MCF 10A (cell line): ENCODE measurements at regions of chr6 and their contacts with region 1.

Region 1: GRCh38 chr6:152948150-152948768 is 34.6 kb downstream of the FBXO5 start:
- DNase-seq: peak; percentile 71
- H3K4me3 Mint-ChIP-seq: no peak overlapping the region
- H3K27ac Mint-ChIP-seq: no peak overlapping the region
- H3K4me1 Mint-ChIP-seq: peaks cover 15% of the 10 kb centered on the region
- H3K27me3 Mint-ChIP-seq: peaks cover 19% of the 10 kb centered on the region
- CTCF ChIP-seq: peak; percentile 77

Region 2: DNA sequence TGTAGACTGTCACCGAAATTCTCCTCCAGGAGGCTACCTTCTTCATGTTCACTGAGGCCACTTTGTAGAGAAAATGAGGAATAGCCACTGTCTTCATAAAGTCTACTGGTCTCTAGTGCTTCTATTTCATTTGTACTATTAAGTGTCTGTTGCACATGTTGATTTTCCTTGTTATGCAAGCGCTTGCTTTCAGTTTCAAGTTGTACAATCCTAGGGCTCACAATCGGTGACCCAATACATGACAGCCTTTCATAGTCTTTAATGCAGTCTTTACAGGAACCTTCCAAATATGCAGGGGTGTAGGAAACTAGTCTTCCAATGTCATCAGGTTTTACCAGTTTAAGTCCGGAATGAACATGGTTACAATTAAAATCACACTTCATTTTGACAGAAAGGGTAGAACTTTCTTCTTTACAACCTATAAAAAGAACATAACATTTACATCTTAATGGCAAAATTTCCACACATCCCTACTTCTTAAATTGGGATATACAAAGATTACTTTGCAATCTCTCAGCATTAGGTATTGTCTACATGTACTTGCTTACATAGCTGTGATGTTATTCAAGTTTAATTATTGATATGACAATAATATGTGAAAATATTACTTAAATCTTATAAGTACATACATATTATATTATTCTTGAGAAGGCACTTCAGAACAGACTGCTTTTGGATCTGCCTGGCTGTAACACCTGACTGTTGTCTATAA is 27.1 kb after region 1 on chr6:
- CTCF ChIA-PET with region 1: interaction called, 10 read pairs
- POLR2A ChIA-PET with region 1: interaction called, 3 read pairs
- intact Hi-C with region 1: no loop called
- DNase-seq: peak; percentile 34
- H3K4me3 Mint-ChIP-seq: no peak overlapping the region
- H3K27ac Mint-ChIP-seq: peak overlapping the region; percentile 67
- H3K4me1 Mint-ChIP-seq: peaks cover 33% of the 10 kb centered on the region
- H3K27me3 Mint-ChIP-seq: no peaks in the 10 kb centered on the region
- CTCF ChIP-seq: no peak

Region 3: DNA sequence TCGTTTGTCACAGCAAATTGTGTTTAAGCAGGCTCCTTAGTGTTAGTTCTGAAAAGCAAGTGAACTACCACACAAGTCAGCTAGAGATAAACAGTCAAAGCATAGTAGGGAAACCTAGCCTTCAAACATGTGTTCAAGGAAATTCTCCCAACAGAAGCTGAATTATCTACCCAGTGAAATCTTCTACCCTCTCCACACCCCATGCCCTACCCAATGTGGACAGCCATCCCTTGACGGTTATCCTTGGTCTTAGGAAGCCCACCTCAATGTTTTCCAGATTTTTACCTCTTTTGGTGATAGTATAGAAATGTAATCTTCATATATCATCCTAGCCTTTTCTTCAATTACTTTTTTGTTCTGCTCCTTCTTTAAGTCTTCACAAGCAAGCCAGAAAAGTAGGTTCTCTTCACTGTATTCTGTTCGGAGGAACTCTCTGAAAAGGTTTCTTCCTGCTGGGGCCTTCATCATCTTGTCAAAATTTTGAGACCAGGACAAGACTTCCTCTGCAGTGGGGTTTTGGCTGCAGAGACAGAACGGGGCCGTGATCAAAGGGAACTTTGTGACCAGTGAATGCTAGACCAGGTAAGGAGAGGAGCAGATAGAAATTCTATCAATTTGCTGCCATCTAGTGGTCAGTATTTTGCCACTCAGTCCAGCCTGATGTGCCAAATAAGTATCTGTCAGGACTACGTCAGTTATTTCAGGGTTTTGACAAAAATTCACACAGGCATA is 75.9 kb after region 1 on chr6:
- CTCF ChIA-PET with region 1: interaction called, 55 read pairs
- POLR2A ChIA-PET with region 1: no interaction called
- intact Hi-C with region 1: no loop called
- DNase-seq: peak; percentile 70
- H3K4me3 Mint-ChIP-seq: no peak overlapping the region
- H3K27ac Mint-ChIP-seq: no peak overlapping the region
- H3K4me1 Mint-ChIP-seq: peaks cover 6% of the 10 kb centered on the region
- H3K27me3 Mint-ChIP-seq: no peaks in the 10 kb centered on the region
- CTCF ChIP-seq: peak; percentile 70

Region 4: DNA sequence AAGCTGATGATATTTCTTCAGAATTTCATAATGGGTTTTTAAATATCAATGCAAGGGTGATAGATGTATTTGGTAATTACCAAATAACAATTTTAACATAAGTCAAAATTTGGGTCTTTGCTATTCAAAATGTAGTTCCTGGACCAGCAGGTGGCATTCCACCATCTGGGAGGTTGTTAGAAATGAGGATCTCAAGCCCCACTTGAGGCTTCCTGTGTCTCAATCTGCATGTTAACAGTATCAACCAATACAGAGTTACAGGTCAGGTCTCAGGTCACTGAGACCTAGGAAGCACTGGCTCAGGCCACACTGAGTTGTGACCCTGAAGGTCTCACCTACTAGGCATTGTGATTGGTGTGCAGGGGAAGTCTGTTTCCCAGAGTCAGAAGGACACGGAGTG is 111.5 kb after region 1 on chr6:
- CTCF ChIA-PET with region 1: no interaction called
- POLR2A ChIA-PET with region 1: no interaction called
- intact Hi-C with region 1: no loop called
- DNase-seq: peak; percentile 25
- H3K4me3 Mint-ChIP-seq: no peak overlapping the region
- H3K27ac Mint-ChIP-seq: no peak overlapping the region
- H3K4me1 Mint-ChIP-seq: no peaks in the 10 kb centered on the region
- H3K27me3 Mint-ChIP-seq: no peaks in the 10 kb centered on the region
- CTCF ChIP-seq: peak; percentile 13

Region 5: DNA sequence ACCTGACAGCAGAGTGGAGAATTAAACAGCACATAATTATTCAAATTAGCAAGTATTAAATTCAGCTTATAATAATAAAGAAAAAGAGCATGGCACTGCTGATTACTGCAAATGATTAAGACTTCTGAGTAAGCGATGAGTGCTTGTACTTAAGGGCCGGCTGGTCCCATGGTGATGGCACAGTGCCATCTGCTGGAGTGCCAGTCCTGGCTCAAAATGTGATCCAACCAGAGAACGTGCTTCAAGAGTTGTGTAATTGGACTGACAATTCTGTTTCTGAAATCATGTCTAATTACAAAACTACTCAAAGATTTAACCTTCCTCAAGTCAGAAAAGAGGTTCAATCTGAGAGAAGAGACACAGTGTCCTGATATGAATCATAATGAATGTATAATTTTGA is 364.4 kb after region 1 on chr6:
- CTCF ChIA-PET with region 1: no interaction called
- POLR2A ChIA-PET with region 1: no interaction called
- intact Hi-C with region 1: loop called (anchors 5 kb)
- DNase-seq: peak; percentile 87
- H3K4me3 Mint-ChIP-seq: no peak overlapping the region
- H3K27ac Mint-ChIP-seq: no peak overlapping the region
- H3K4me1 Mint-ChIP-seq: no peaks in the 10 kb centered on the region
- H3K27me3 Mint-ChIP-seq: no peaks in the 10 kb centered on the region
- CTCF ChIP-seq: peak; percentile 28